Transverse colon (tissue), 4 donors: ENCODE measurements at regions of chr15 and their contacts with region 1.

Region 1: GRCh38 chr15:84750583-84751092 is 2.2 kb downstream of the ZNF592 start:
- DNase-seq: no peak
- H3K4me3 ChIP-seq: peak overlapping the region in 2 of 4 donors; percentile 61 to 88
- H3K27ac ChIP-seq: peak overlapping the region; percentile 99 to 100 (median 100)
- H3K4me1 ChIP-seq: peaks cover 37 to 80% (median 69%) of the 10 kb centered on the region in 4 donors
- H3K27me3 ChIP-seq: no peaks in the 10 kb centered on the region
- CTCF ChIP-seq: no peak
- EP300 ChIP-seq: no peak
- POLR2A ChIP-seq: no peak

Region 2: GRCh38 chr15:84658080-84658787 is 92.4 kb before region 1 on chr15 and contains the start of gene NMB:
- in situ Hi-C with region 1: loop called in 1 of 4 experiments (anchors 25 kb)
- intact Hi-C with region 1: no loop called
- DNase-seq: peak; percentile 89
- H3K4me3 ChIP-seq: peak within 1 kb of the TSS; percentile 39 to 72 (median 58)
- H3K27ac ChIP-seq: peak within 1 kb of the TSS; percentile 83 to 91 (median 86)
- H3K4me1 ChIP-seq: peaks cover 9 to 25% (median 17%) of the 10 kb centered on the region in 4 donors
- H3K27me3 ChIP-seq: no peaks in the 10 kb centered on the region
- CTCF ChIP-seq: peak; percentile 61 to 76 (median 72)
- EP300 ChIP-seq: no peak
- POLR2A ChIP-seq: peak; percentile 9
- total RNA-seq, gene NMB: 2.3 to 2.4 TPM in 2 of 4 donors, not detected in the others

Region 3: DNA sequence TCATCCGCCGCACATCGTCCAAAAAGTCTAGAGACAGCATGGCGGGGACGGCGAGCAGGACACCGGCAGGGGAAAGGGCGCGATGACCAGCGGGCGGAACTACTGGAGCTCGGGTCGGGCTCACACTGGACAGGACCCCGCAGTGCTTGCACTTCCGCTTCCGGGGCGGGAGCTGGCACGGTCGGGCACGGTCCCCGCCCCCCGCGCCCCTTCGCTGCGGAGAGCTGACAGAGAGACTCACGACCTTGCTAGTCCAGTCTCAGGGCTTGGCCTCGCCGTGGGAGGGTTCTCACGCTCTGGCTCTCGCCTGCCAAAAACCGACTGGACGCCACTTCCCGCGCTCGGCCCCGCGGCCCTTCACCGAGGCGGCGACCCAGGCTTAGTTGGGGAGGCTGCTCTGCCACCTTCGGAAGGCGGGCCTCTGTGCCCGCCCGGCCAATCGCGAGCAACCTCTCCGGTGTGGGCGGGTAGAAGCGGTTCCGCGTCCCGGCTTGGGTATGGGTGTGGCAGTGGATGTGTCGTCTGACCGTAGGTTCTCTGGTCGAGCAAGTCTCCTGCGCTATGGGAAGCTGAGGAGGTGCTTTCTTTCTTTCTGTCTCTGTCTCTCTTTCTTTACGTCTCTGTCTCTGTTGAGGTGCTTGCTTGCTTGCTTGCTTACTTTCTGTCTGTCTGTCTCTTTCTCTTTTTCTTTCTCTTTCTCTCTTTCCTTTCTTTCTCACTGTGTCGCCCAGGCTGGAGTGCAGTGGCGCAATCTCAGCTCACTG is 34.4 kb before region 1 on chr15 and contains the start of gene SEC11A:
- in situ Hi-C with region 1: no loop called
- intact Hi-C with region 1: loop called (anchors 5 kb)
- DNase-seq: peak; percentile 97
- H3K4me3 ChIP-seq: peak within 1 kb of the TSS; percentile 52 to 78 (median 65)
- H3K27ac ChIP-seq: peak within 1 kb of the TSS; percentile 92 to 95 (median 94)
- H3K4me1 ChIP-seq: peaks cover 9 to 28% (median 12%) of the 10 kb centered on the region in 4 donors
- H3K27me3 ChIP-seq: no peaks in the 10 kb centered on the region
- CTCF ChIP-seq: peak in 1 of 5 experiments; percentile 8
- EP300 ChIP-seq: no peak
- POLR2A ChIP-seq: peak; percentile 98
- total RNA-seq, gene SEC11A: 19.9 to 124 (median 83.0) TPM

Region 4: GRCh38 chr15:84818261-84819131 is 67.9 kb after region 1 on chr15:
- in situ Hi-C with region 1: no loop called
- intact Hi-C with region 1: loop called (anchors 10 kb)
- DNase-seq: no peak
- H3K4me3 ChIP-seq: peak overlapping the region in 1 of 4 donors; percentile 51
- H3K27ac ChIP-seq: peak overlapping the region; percentile 71 to 87 (median 76)
- H3K4me1 ChIP-seq: peaks cover 9 to 31% (median 15%) of the 10 kb centered on the region in 4 donors
- H3K27me3 ChIP-seq: peaks cover 4% of the 10 kb centered on the region
- CTCF ChIP-seq: no peak
- EP300 ChIP-seq: no peak
- POLR2A ChIP-seq: no peak